H1 (cell line): ENCODE measurements at regions of chr1 and their contacts with region 1.

Region 1: DNA sequence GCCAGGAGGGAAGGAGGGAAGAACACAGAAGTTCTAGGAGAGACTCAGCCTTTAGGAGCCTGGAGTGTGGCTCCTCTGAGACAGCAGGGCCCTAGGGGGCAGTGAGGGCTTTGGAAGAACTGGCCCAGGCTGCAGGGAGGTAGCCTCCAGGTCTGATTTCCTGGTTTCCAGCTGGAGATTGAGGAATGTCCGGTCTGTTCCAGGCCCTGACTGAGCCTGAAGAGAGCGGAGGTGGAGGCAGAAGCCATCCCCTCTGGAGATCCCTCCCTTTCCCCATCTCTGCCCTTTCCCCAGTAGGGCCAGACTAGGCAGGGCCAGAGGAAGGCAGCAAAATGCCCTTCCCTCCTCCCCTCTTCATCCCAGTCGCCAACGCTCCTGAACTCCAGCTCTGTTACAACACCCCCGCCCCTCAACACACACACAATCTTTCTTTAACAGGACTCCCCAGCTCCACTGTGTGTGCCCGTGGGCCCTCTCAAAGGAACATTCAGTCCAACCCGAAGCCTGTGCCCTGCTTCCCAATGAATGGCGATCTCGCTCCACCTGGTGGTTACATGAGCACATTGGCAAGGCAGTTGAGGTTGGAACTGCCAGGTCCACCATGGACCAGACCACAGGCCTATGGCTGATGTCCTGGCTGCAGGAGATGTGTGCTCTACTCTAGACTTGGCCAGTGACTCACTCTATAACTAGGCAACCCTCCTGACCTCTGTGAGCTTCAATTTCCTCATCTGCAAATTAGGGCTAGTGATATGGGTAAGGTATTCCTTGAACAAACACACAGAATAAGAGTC is 32.0 kb downstream of the MAP7D1 start:
- DNase-seq: peak in 1 of 2 experiments; percentile 86
- H3K4me3 ChIP-seq: peak overlapping the region in 2 of 4 experiments; percentile 3 to 37; a peak in 3 of 8 replicates
- H3K27ac ChIP-seq: peak overlapping the region; percentile 19; the same call in 1 of the 2 replicates
- H3K4me1 ChIP-seq: peaks cover 0 to 6% (median 2%) of the 10 kb centered on the region in 4 experiments; a peak in 2 of 7 replicates
- H3K27me3 ChIP-seq: no peaks in the 10 kb centered on the region
- CTCF ChIP-seq: peak; percentile 93 to 98 (median 97)
- EP300 ChIP-seq: no peak; a peak in 1 of 3 replicates
- POLR2A ChIP-seq: peak in 1 of 2 experiments; percentile 62; a peak in 2 of 3 replicates
- RAD21 ChIP-seq: peak; percentile 95 to 97

Region 2: GRCh38 chr1:36123356-36123755 is 64.6 kb before region 1 on chr1:
- CTCF ChIA-PET with region 1: interaction called, 15 read pairs
- POLR2A ChIA-PET with region 1: interaction called, 4 read pairs
- DNase-seq: no peak
- H3K4me3 ChIP-seq: no peak overlapping the region
- H3K27ac ChIP-seq: no peak overlapping the region
- H3K4me1 ChIP-seq: peaks cover 0 to 13% (median 6%) of the 10 kb centered on the region in 4 experiments; a peak in 6 of 7 replicates
- H3K27me3 ChIP-seq: peaks cover 16 to 38% (median 30%) of the 10 kb centered on the region in 4 experiments
- CTCF ChIP-seq: no peak
- EP300 ChIP-seq: no peak
- POLR2A ChIP-seq: no peak
- RAD21 ChIP-seq: no peak

Region 3: GRCh38 chr1:36149237-36149972 is 38.6 kb before region 1 on chr1 and contains the start of gene TRAPPC3:
- CTCF ChIA-PET with region 1: interaction called, 261 read pairs
- POLR2A ChIA-PET with region 1: interaction called, 19 read pairs
- DNase-seq: peak; percentile 99 to 100
- H3K4me3 ChIP-seq: peak within 1 kb of the TSS; percentile 68 to 85 (median 79)
- H3K27ac ChIP-seq: peak within 1 kb of the TSS; percentile 62
- H3K4me1 ChIP-seq: peaks cover 8 to 19% (median 15%) of the 10 kb centered on the region in 4 experiments
- H3K27me3 ChIP-seq: peaks cover 11 to 21% (median 17%) of the 10 kb centered on the region in 4 experiments
- CTCF ChIP-seq: peak; percentile 95 to 99 (median 98)
- EP300 ChIP-seq: peak in 1 of 2 experiments; percentile 71; a peak in 1 of 3 replicates
- POLR2A ChIP-seq: peak in 1 of 2 experiments; percentile 73; a peak in 2 of 3 replicates
- RAD21 ChIP-seq: peak; percentile 98
- total RNA-seq, gene TRAPPC3: 42.0 and 47.8 TPM in 2 replicates

Region 4: DNA sequence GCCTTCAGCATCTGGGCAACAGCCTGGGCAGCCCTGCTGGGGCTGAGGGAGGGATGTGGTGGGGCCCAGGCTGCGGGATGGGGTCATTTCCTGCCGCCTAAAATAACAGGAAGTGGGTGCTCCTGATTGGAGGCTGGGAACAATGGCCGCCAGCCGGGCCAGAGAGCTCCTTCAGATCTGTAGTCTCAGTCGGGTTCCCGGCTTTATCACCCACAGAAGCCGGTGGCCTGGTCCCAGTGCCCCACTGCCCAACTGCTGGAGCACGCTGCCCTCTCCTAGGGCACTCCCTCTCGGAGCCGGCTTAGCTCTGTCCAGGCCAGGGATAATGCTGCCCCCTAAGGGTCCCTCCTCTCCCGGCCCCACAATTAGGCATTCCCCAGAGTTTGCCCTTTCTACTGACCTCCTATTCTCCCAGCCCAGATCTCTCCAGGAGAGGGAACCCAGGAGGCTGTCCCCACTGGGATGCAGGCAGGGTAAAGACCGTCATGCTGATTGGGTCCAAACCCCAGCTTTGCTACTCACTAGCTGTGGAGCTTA is 27.0 kb before region 1 on chr1:
- CTCF ChIA-PET with region 1: interaction called, 261 read pairs
- POLR2A ChIA-PET with region 1: interaction called, 17 read pairs
- DNase-seq: peak in 1 of 2 experiments; percentile 82
- H3K4me3 ChIP-seq: peak overlapping the region; percentile 29 to 60 (median 48)
- H3K27ac ChIP-seq: peak overlapping the region; percentile 89; the same call in 1 of the 2 replicates
- H3K4me1 ChIP-seq: peaks cover 0 to 22% (median 13%) of the 10 kb centered on the region in 4 experiments; a peak in 6 of 7 replicates
- H3K27me3 ChIP-seq: no peaks in the 10 kb centered on the region
- CTCF ChIP-seq: peak; percentile 54 to 69 (median 59)
- EP300 ChIP-seq: no peak
- POLR2A ChIP-seq: peak; percentile 93 to 96
- RAD21 ChIP-seq: peak; percentile 42 to 45

Region 5: DNA sequence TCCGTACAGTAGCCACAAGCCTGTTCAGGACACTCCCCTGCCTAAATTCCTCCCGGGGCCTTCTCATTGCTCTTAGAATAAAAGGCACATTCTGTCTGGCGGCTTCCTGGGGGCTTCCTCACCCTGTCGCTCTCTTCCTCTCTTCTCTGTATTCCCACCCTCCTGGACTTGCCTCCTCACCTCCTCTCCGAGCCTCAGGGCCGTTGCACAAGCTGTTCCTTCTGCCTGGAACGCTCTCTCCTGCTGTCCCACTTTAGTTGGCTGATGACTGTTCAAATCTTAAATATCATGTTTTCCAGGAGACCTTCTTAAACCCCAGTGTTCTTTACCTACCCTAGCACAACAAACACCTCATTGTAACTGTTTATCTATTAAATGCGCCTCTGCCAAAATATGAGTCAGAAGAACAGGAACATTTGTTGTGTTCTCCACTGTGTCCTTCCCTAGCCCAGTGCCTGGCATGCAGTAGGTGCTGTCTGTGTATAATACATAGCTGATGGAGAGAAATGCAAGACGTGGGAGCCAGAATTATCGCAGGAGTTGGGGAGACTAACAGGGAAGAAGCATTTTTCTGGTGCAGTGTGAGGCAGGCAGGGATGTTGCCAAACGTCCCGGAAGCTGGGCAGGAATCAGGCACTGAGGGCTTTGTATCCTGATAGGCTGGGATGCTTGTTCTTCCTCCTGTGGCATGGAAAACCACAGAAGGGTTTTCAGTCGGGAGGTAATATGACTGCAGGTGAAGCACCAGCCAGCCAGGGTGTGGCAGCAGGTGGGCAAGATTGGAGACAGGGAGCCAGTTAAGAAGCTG is 12.1 kb after region 1 on chr1:
- CTCF ChIA-PET with region 1: interaction called, 31 read pairs
- POLR2A ChIA-PET with region 1: interaction called, 6 read pairs
- DNase-seq: no peak
- H3K4me3 ChIP-seq: no peak overlapping the region
- H3K27ac ChIP-seq: no peak overlapping the region
- H3K4me1 ChIP-seq: peaks cover 0 to 10% (median 3%) of the 10 kb centered on the region in 4 experiments; a peak in 4 of 7 replicates
- H3K27me3 ChIP-seq: no peaks in the 10 kb centered on the region
- CTCF ChIP-seq: peak in 2 of 3 experiments; percentile 3 to 9; a peak in 2 of 4 replicates
- EP300 ChIP-seq: no peak
- POLR2A ChIP-seq: no peak
- RAD21 ChIP-seq: peak in 1 of 2 experiments; percentile 23; a peak in 1 of 4 replicates

Region 6: DNA sequence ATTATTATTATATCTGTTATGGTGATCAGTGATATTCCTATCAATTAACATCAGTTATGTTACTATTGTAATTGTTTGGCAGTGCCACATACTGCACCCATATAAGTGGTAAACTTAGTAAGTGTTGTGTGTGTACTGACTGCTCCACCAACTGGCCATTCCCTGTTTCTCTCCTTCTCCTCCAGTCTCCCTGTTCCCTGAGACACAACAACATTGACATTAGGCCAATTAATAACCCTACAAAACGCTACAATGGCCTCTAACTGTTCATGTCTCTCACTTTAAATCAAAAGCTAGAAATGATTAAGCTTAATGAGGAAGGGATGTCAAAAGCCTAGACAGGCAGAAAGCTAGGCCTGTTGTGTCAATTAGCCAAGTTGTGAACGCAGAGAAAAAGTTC is 29.7 kb after region 1 on chr1:
- CTCF ChIA-PET with region 1: interaction called, 30 read pairs
- POLR2A ChIA-PET with region 1: no interaction called
- DNase-seq: no peak
- H3K4me3 ChIP-seq: no peak overlapping the region
- H3K27ac ChIP-seq: no peak overlapping the region
- H3K4me1 ChIP-seq: no peaks in the 10 kb centered on the region
- H3K27me3 ChIP-seq: no peaks in the 10 kb centered on the region
- CTCF ChIP-seq: peak in 2 of 3 experiments; percentile 15 to 28; a peak in 2 of 4 replicates
- EP300 ChIP-seq: no peak
- POLR2A ChIP-seq: no peak
- RAD21 ChIP-seq: peak; percentile 31 to 45

Region 7: DNA sequence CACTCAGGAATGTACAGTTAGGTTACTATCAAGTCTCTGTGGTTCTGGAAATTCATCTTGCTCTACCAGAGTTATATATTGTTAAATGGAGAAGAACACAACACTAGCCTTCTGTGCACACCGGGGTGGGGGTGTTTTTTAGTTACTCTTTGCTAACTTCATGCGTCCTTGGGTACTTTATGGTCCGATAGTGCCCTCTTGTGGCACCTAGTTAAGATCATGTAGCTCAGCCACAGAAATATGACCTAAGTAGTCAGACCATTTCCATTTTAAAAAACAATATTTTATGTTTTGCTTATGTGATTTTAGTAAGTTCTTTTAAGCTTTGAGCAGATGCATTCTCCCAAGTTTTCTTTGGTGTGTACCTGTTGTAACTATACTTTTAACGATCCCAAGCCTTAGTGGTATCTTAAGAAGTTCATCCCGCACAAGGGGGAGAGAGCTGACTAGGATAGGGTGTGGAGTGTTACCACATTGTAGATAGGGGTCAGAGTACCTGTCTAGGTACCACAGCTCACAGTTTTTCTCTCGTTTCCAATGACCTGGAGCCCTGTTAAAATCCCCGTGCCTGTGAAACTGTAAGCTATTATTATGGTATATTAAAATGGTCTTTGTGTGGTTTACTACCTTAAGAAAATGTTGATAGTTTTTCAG is 97.6 kb after region 1 on chr1:
- CTCF ChIA-PET with region 1: interaction called, 18 read pairs
- POLR2A ChIA-PET with region 1: no interaction called
- DNase-seq: peak in 1 of 2 experiments; percentile 53
- H3K4me3 ChIP-seq: no peak overlapping the region
- H3K27ac ChIP-seq: no peak overlapping the region
- H3K4me1 ChIP-seq: no peaks in the 10 kb centered on the region
- H3K27me3 ChIP-seq: no peaks in the 10 kb centered on the region
- CTCF ChIP-seq: peak in 2 of 3 experiments; percentile 66 to 67; a peak in 3 of 4 replicates
- EP300 ChIP-seq: no peak
- POLR2A ChIP-seq: no peak
- RAD21 ChIP-seq: peak; percentile 78 to 81

Region 8: DNA sequence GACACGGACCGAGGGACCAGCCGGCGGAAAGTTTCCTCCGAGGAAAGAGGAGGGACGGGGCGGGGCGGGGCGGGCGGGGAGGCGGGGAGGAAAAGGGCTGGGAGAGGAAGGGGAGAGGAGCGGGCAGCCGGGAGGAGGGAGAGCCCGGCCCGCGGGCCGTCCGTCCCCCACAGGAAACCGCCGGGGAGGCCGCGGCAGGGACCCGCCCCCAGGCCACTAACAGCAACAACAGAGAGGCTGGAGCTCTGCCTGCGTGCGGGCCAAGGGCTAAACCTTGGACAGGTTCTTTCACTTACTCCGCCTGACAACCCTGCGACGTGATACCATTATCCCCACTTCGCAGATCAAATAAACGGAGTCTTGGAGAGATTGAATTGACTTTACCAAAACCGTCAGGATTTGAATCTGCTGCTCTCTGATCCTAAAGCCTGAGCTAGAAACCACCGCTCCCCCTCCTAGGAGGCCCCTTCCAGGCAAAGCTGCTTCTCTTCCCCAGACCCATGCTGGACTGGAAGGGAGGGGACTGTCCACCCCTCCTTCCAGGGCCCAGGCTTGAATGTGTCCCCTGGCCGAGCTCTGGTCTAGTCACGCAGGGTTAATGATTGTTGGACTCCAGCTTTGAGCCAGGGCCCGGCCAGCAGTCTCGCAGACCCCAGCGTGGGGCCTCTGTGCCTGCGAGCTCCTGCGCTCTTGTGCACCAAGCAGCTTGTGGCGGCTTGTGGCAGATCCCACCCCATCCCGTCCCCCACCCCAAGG is 135.8 kb after region 1 on chr1 and contains the start of gene EVA1B:
- CTCF ChIA-PET with region 1: no interaction called
- POLR2A ChIA-PET with region 1: no interaction called
- DNase-seq: peak in 1 of 2 experiments; percentile 79
- H3K4me3 ChIP-seq: peak within 1 kb of the TSS; percentile 27 to 67 (median 49)
- H3K27ac ChIP-seq: no peak within 1 kb of the TSS
- H3K4me1 ChIP-seq: peaks cover 0 to 28% (median 16%) of the 10 kb centered on the region in 4 experiments; a peak in 6 of 7 replicates
- H3K27me3 ChIP-seq: peaks cover 0 to 39% (median 20%) of the 10 kb centered on the region in 4 experiments; a peak in 5 of 7 replicates
- CTCF ChIP-seq: no peak
- EP300 ChIP-seq: no peak
- POLR2A ChIP-seq: no peak; a peak in 1 of 3 replicates
- RAD21 ChIP-seq: no peak
- total RNA-seq, gene EVA1B: 10.0 and 10.3 TPM in 2 replicates